ENCODE measurements at regions of chrX and their contacts with region 1.

Region 1: GRCh38 chrX:120603707-120604360 is at the start of gene MCTS1:
- DNase-seq: peak; percentile 86
- ATAC-seq: peak; percentile 98
- total RNA-seq, gene MCTS1: 30.3 TPM

Region 2: GRCh38 chrX:119943185-119943988 is 660.4 kb before region 1 on chrX and contains the start of gene NKAP:
- intact Hi-C with region 1: no loop called
- DNase-seq: peak; percentile 79
- ATAC-seq: peak; percentile 97
- total RNA-seq, gene NKAP: 3.6 TPM

Region 3: GRCh38 chrX:120560842-120561633 is 42.8 kb before region 1 on chrX and contains the start of gene CUL4B:
- intact Hi-C with region 1: loop called (anchors 5 kb)
- DNase-seq: peak; percentile 95
- ATAC-seq: peak; percentile 96
- total RNA-seq, gene CUL4B: 17.9 TPM

Region 4: GRCh38 chrX:120647127-120647526 is 43.3 kb after region 1 on chrX:
- intact Hi-C with region 1: no loop called
- DNase-seq: no peak
- ATAC-seq: no peak

Region 5: GRCh38 chrX:120741458-120741857 is 137.6 kb after region 1 on chrX:
- intact Hi-C with region 1: no loop called
- DNase-seq: no peak
- ATAC-seq: no peak

Measured in Right ventricle myocardium superior (tissue), 1 donor.